Adrenal gland (tissue), 19 donors: ENCODE measurements at regions of chr15 and their contacts with region 1.

Region 1: GRCh38 chr15:50675536-50676144 is 11.0 kb downstream of the TRPM7 start:
- DNase-seq: no peak
- H3K4me3 ChIP-seq: no peak overlapping the region
- H3K27ac ChIP-seq: no peak overlapping the region
- H3K4me1 ChIP-seq: peaks cover 0 to 17% of the 10 kb centered on the region in 2 donors
- H3K27me3 ChIP-seq: no peaks in the 10 kb centered on the region
- CTCF ChIP-seq: peak; percentile 62 to 83 (median 74)
- POLR2A ChIP-seq: no peak

Region 2: GRCh38 chr15:50850003-50850402 is 174.4 kb after region 1 on chr15:
- intact Hi-C with region 1: no loop called
- DNase-seq: no peak
- H3K4me3 ChIP-seq: no peak overlapping the region
- H3K27ac ChIP-seq: no peak overlapping the region
- H3K4me1 ChIP-seq: no peaks in the 10 kb centered on the region
- H3K27me3 ChIP-seq: no peaks in the 10 kb centered on the region
- CTCF ChIP-seq: no peak
- POLR2A ChIP-seq: no peak

Region 3: GRCh38 chr15:50876989-50877360 is 201.3 kb after region 1 on chr15:
- intact Hi-C with region 1: loop called (anchors 5 to 10 kb)
- DNase-seq: peak; percentile 68 to 92 (median 83)
- H3K4me3 ChIP-seq: peak overlapping the region in 2 of 4 donors; percentile 13 to 55
- H3K27ac ChIP-seq: no peak overlapping the region
- H3K4me1 ChIP-seq: peaks cover 0 to 6% of the 10 kb centered on the region in 2 donors
- H3K27me3 ChIP-seq: no peaks in the 10 kb centered on the region
- CTCF ChIP-seq: peak; percentile 91 to 97 (median 96)
- POLR2A ChIP-seq: no peak

Region 4: GRCh38 chr15:50908210-50909009 is 232.8 kb after region 1 on chr15 and contains the start of gene AP4E1:
- intact Hi-C with region 1: loop called in 1 of 2 experiments (anchors 10 kb)
- DNase-seq: peak; percentile 88 to 96 (median 91)
- H3K4me3 ChIP-seq: peak within 1 kb of the TSS; percentile 65 to 100 (median 84)
- H3K27ac ChIP-seq: peak within 1 kb of the TSS; percentile 56 to 96 (median 93)
- H3K4me1 ChIP-seq: peaks cover 11 to 31% of the 10 kb centered on the region in 2 donors
- H3K27me3 ChIP-seq: no peaks in the 10 kb centered on the region
- CTCF ChIP-seq: peak; percentile 92 to 100 (median 98)
- POLR2A ChIP-seq: peak; percentile 24 to 77
- total RNA-seq, gene AP4E1: 5.4 to 23.0 (median 9.9) TPM